Endothelial cell of umbilical vein (primary cell): ENCODE measurements at regions of chr11 and their contacts with region 1.

Region 1: DNA sequence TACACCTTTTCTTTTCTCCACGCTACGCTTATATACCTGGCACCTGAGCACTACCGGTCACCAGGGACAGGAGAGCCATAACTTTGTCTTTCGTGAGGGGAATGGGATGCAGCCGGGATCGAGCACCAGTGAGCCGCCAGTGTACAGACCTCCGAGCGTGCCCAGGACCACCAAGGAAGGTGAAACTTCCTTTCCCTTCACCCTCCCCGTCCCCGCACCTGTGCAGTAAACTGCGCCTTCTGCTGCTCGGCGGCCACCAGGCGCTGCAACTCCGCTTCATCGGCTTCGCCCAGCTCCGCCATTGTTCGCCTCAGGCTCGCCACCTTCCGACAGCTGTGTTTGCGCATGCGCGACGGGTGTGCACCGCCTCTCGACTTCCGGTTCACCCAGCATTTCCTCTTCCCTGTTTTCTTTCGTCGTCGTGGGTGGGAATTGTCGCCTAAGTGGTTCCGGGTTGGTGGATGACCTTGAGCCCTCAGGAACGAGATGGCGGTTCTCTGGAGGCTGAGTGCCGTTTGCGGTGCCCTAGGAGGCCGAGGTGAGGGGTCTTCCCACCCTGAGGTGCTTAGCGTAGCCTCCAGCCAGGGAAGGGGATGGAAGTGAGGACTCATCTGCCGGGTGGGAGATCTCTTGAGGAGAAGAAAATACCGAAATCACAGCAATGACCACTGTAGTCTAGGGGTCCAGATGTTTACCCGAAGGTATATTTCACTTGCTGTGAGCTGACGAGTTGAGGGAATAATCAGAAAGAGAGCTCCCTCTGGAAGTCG is at the starts of genes SDHD and TIMM8B:
- DNase-seq: peak; percentile 98
- H3K4me3 ChIP-seq: peak within 1 kb of the TSS; percentile 54 to 90 (median 86)
- H3K27ac ChIP-seq: peak within 1 kb of the TSS; percentile 54
- H3K4me1 ChIP-seq: peaks cover 13% of the 10 kb centered on the region
- H3K27me3 ChIP-seq: no peaks in the 10 kb centered on the region
- CTCF ChIP-seq: peak; percentile 17 to 62
- POLR2A ChIP-seq: peak; percentile 52
- total RNA-seq, gene SDHD: 72.3 and 79.0 TPM in 2 replicates
- total RNA-seq, gene TIMM8B: 64.1 and 77.0 TPM in 2 replicates

Region 2: DNA sequence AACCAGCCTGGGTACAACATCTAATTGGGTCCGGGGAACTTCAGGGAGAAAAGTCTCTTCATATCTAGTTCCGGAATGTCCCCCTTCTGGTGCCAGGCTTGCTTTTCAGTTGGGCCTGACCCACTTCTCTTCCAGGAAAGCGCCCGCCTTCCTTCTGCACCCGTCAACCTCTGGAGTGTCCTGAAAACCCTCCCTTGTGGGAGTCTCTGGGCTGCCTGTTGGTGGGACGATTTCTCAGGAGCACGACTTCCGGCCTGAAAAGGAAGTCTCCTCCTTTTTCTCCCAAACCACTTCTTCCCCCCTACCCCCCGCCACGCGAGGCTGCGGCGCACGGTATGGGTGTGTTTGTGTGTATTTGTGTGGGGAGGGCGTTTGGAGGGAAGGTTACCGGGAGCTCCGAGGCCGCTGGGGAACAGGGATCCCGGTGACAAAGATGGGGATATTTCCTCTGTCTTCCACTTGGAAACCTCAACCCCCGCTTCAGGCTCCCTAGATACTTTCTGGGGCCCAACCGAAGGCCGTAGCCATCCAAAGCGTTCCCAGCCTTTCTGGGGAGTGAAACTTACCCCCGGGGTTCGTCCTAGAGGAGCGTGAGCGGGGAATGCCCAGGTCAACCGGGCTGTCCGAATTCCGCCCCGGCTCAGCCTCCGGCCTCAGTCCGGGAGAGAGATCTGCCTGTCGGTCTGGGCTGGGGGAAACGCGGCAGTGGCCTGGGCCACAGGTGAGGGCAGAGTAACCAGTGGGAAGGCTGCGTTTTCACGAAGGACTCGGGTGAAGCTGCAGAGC is 12.4 kb before region 1 on chr11 and contains the start of gene NKAPD1:
- CTCF ChIA-PET with region 1: no interaction called
- POLR2A ChIA-PET with region 1: interaction called, 3 read pairs
- dilution Hi-C with region 1: no loop called
- intact Hi-C with region 1: loop called (anchors 1 kb)
- DNase-seq: peak; percentile 93
- H3K4me3 ChIP-seq: peak within 1 kb of the TSS; percentile 68 to 79 (median 71)
- H3K27ac ChIP-seq: peak within 1 kb of the TSS; percentile 69
- H3K4me1 ChIP-seq: peaks cover 10% of the 10 kb centered on the region
- H3K27me3 ChIP-seq: no peaks in the 10 kb centered on the region
- CTCF ChIP-seq: no peak
- POLR2A ChIP-seq: peak; percentile 45
- total RNA-seq, gene NKAPD1: 16.7 and 18.5 TPM in 2 replicates

Region 3: GRCh38 chr11:112150517-112150916 is 63.9 kb after region 1 on chr11:
- CTCF ChIA-PET with region 1: no interaction called
- POLR2A ChIA-PET with region 1: no interaction called
- dilution Hi-C with region 1: no loop called
- intact Hi-C with region 1: no loop called
- DNase-seq: no peak
- H3K4me3 ChIP-seq: no peak overlapping the region
- H3K27ac ChIP-seq: no peak overlapping the region
- H3K4me1 ChIP-seq: no peaks in the 10 kb centered on the region
- H3K27me3 ChIP-seq: no peaks in the 10 kb centered on the region
- CTCF ChIP-seq: no peak
- POLR2A ChIP-seq: no peak

Region 4: GRCh38 chr11:112163875-112164685 is 77.5 kb after region 1 on chr11 and contains the start of gene IL18:
- CTCF ChIA-PET with region 1: no interaction called
- POLR2A ChIA-PET with region 1: no interaction called
- dilution Hi-C with region 1: no loop called
- intact Hi-C with region 1: no loop called
- DNase-seq: no peak
- H3K4me3 ChIP-seq: peak within 1 kb of the TSS in 1 of 3 experiments; percentile 20
- H3K27ac ChIP-seq: peak within 1 kb of the TSS; percentile 19
- H3K4me1 ChIP-seq: peaks cover 11% of the 10 kb centered on the region
- H3K27me3 ChIP-seq: no peaks in the 10 kb centered on the region
- CTCF ChIP-seq: no peak
- POLR2A ChIP-seq: no peak
- total RNA-seq, gene IL18: 1.5 and 1.6 TPM in 2 replicates